ENCODE measurements at regions of chr2 and their contacts with region 1.

Region 1: GRCh38 chr2:47388888-47389287 is 14.1 kb upstream of the MSH2 start:
- DNase-seq: no peak
- ATAC-seq: no peak

Region 2: GRCh38 chr2:47058003-47058931 is 330.6 kb before region 1 on chr2:
- intact Hi-C with region 1: no loop called
- DNase-seq: peak; percentile 65
- ATAC-seq: peak; percentile 72

Region 3: DNA sequence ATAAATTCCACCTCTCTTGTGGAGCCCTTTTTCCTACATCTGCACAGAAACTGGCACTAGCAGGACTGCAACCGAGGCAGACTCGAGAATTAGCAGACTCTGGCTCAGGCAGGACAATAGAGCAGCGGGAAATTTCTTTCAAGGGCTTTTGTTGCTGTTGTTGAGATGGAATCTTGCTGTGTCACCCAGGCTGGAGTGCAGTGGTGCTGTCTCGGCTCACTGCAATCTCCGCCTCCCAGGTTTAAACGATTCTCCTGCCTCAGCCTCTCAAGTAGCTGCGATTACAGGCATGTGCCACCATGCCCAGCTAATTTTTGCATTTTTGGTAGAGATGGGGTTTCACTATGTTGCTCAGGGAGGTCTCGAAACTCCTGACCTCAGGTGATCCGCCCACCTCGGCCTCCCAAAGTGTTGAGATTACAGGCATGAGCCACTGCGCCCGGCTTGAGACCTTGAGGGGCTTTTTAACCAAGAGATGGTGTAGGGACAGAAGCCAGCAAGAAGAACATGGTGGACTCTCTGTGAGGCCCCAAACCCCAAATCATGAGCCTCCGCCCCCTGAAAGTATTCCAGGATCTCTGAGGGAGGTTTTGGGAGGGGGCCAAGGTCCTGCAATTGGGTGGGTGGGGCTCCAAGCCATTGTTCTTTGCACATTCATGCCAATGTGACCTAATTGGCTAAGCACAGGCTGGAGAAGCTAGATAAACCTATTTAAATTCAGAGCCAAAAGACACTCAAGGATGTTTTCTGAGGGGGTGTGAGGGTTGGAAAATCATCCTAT is 54.3 kb before region 1 on chr2:
- intact Hi-C with region 1: loop called (anchors 2 kb)
- DNase-seq: no peak
- ATAC-seq: no peak

Measured in Right ventricle myocardium superior (tissue), 1 donor.